Activated naive CD4-positive, alpha-beta T cell treated with anti-CD3 and anti-CD28 coated beads for 36 hours (primary cell): ENCODE measurements at regions of chr10 and their contacts with region 1.

Region 1: DNA sequence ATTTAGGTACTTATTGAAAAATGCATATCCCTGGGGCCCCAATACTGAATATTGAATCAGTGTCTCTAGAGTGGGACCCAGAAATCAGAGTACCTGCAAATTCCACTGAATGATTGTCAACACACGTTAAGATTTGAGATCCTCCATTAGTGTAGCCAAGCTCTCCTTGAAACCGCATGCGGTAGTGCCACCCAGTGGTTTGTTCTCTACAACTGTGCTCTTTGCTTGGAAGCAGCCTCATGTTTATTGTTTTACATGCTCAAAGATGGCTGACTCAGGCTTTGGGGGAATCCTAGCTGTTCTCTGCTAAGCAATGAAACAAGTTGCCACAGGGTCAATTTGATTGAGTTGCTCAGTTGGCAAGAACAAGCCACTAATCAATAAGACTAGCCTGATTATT is 340.2 kb upstream of the CELF2 start:
- DNase-seq: peak; percentile 81
- H3K4me3 Mint-ChIP-seq: no peak overlapping the region
- H3K27ac Mint-ChIP-seq: no peak overlapping the region
- H3K4me1 Mint-ChIP-seq: peaks cover 5% of the 10 kb centered on the region
- H3K27me3 Mint-ChIP-seq: no peaks in the 10 kb centered on the region

Region 2: DNA sequence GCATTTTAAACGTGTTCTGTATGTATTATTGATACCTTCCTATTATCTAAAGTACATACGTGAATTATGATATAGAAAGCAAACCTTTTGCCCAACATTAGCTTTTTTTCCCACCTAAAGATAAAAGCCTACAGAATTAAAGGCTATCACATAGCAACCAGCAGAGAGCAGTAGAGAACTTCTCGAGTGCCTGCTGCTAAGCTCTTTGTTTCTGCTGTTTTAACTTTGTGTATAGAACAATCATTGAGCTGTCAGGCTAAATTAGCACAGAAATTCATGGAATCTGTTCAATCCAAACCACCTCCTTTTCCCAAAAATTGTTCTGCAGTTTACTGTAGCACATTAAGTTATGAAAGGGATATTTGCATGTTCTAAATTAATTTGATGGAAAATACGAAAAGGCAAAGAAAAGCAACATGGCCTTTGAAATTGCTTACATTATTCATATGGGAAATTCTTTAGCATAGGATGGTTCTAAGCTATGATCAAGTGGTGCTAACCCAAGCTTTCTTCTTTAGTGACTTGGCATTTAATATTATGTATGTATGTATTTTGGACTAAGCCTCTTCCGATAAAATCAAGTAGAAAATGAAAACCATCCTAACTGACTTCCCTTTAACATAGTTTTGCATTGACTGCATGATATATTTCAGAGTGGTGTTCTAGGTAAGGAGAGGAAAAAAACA is 1334.5 kb before region 1 on chr10:
- CTCF ChIA-PET with region 1: interaction called, 9 read pairs
- intact Hi-C with region 1: loop called (anchors 1 kb)
- DNase-seq: no peak
- H3K4me3 Mint-ChIP-seq: no peak overlapping the region
- H3K27ac Mint-ChIP-seq: no peak overlapping the region
- H3K4me1 Mint-ChIP-seq: peaks cover 11% of the 10 kb centered on the region
- H3K27me3 Mint-ChIP-seq: no peaks in the 10 kb centered on the region

Region 3: GRCh38 chr10:9608602-9609001 is 1068.9 kb before region 1 on chr10:
- CTCF ChIA-PET with region 1: no interaction called
- intact Hi-C with region 1: loop called (anchors 2 kb)
- DNase-seq: no peak
- H3K4me3 Mint-ChIP-seq: no peak overlapping the region
- H3K27ac Mint-ChIP-seq: no peak overlapping the region
- H3K4me1 Mint-ChIP-seq: peaks cover 2% of the 10 kb centered on the region
- H3K27me3 Mint-ChIP-seq: peaks cover 23% of the 10 kb centered on the region

Region 4: DNA sequence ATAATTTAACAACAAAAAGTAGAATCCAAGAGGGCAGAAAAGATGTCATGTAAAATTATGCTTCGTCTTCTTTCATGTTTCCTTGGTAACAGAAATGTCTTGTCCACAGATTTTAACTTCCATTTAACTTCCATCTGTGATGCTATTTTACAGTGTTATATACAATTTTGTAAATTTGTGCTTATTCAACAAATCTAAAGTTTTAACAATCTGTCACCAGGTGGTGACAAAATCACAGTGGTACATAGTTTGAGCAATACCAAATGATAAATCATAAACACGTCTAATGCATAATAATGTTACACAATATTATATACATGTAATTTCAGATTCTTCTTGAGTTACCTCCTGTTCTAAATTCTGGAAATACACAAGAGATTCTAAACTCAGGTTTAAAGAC is 444.2 kb before region 1 on chr10:
- CTCF ChIA-PET with region 1: no interaction called
- intact Hi-C with region 1: loop called (anchors 2 kb)
- DNase-seq: no peak
- H3K4me3 Mint-ChIP-seq: no peak overlapping the region
- H3K27ac Mint-ChIP-seq: no peak overlapping the region
- H3K4me1 Mint-ChIP-seq: no peaks in the 10 kb centered on the region
- H3K27me3 Mint-ChIP-seq: peaks cover 13% of the 10 kb centered on the region

Region 5: GRCh38 chr10:10418387-10418786 is 259.1 kb before region 1 on chr10:
- CTCF ChIA-PET with region 1: no interaction called
- intact Hi-C with region 1: loop called (anchors 10 kb)
- DNase-seq: peak; percentile 47
- H3K4me3 Mint-ChIP-seq: no peak overlapping the region
- H3K27ac Mint-ChIP-seq: no peak overlapping the region
- H3K4me1 Mint-ChIP-seq: peaks cover 35% of the 10 kb centered on the region
- H3K27me3 Mint-ChIP-seq: no peaks in the 10 kb centered on the region

Region 6: GRCh38 chr10:10520491-10521385 is 156.7 kb before region 1 on chr10:
- CTCF ChIA-PET with region 1: interaction called, 3 read pairs
- intact Hi-C with region 1: loop called (anchors 2 kb)
- DNase-seq: peak; percentile 43
- H3K4me3 Mint-ChIP-seq: no peak overlapping the region
- H3K27ac Mint-ChIP-seq: peak overlapping the region; percentile 76
- H3K4me1 Mint-ChIP-seq: peaks cover 13% of the 10 kb centered on the region
- H3K27me3 Mint-ChIP-seq: peaks cover 27% of the 10 kb centered on the region

Region 7: DNA sequence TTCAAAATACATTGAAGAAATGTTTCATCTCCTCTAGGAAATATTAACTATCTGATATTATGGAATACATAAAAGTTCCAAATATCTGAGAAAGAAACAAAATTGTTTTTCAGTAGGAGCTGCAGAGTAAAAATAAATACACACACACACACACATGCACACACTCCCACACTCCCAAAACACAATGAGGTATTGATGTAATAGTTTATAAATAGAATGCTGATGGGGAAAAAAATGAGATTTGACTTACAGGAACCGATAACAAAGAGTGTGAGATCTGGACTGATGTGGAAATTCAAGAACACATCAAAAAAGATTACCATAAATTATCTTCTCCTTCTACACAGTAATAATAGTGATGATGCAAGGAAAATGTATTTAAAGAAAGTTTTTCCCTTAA is 97.8 kb before region 1 on chr10:
- CTCF ChIA-PET with region 1: no interaction called
- intact Hi-C with region 1: no loop called
- DNase-seq: no peak
- H3K4me3 Mint-ChIP-seq: no peak overlapping the region
- H3K27ac Mint-ChIP-seq: no peak overlapping the region
- H3K4me1 Mint-ChIP-seq: no peaks in the 10 kb centered on the region
- H3K27me3 Mint-ChIP-seq: peaks cover 21% of the 10 kb centered on the region

Region 8: DNA sequence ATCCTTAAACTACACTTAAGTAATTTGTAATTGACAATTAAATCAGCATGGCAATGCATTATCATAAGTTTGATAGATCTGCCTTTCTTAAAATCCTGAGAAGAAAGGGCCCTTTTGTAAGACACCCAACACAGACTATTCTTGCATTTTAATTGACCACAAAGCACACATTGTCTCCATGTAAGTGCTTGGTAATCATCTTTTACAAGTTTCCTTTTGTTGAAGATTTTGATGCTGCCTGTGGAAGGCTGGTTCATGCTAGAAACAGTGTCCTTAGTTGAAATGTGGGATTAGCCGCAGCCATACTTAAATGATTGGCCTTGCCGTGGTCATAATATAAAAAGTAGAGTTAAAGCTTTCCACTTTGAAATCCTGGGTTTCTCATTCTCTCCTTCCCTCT is 307.9 kb after region 1 on chr10:
- CTCF ChIA-PET with region 1: no interaction called
- intact Hi-C with region 1: no loop called
- DNase-seq: no peak
- H3K4me3 Mint-ChIP-seq: no peak overlapping the region
- H3K27ac Mint-ChIP-seq: no peak overlapping the region
- H3K4me1 Mint-ChIP-seq: no peaks in the 10 kb centered on the region
- H3K27me3 Mint-ChIP-seq: peaks cover 8% of the 10 kb centered on the region